GM12878 (cell line): ENCODE measurements at regions of chr10 and their contacts with region 1.

Region 1: GRCh38 chr10:102432162-102432950 is at the start of gene CUEDC2:
- DNase-seq: peak; percentile 88
- ATAC-seq: peak; percentile 95
- H3K4me3 ChIP-seq: peak within 1 kb of the TSS; percentile 93
- H3K27ac ChIP-seq: peak within 1 kb of the TSS; percentile 90
- H3K4me1 ChIP-seq: peaks cover 22% of the 10 kb centered on the region
- H3K27me3 ChIP-seq: no peaks in the 10 kb centered on the region
- CTCF ChIP-seq: no peak
- EP300 ChIP-seq: no peak; a peak in 1 of 4 replicates
- POLR2A ChIP-seq: peak; percentile 85
- RAD21 ChIP-seq: no peak
- polyA plus RNA-seq, gene CUEDC2: 20.4 to 45.2 TPM

Region 2: GRCh38 chr10:101782811-101783735 is 649.3 kb before region 1 on chr10 and contains the start of gene NPM3:
- CTCF ChIA-PET with region 1: no interaction called
- POLR2A ChIA-PET with region 1: no interaction called
- RAD21 ChIA-PET with region 1: no interaction called
- SMC1A ChIA-PET with region 1: no interaction called
- in situ Hi-C with region 1: no loop called
- intact Hi-C with region 1: no loop called
- DNase-seq: no peak
- ATAC-seq: peak; percentile 76
- H3K4me3 ChIP-seq: peak within 1 kb of the TSS; percentile 85
- H3K27ac ChIP-seq: peak within 1 kb of the TSS; percentile 71
- H3K4me1 ChIP-seq: peaks cover 41% of the 10 kb centered on the region
- H3K27me3 ChIP-seq: no peaks in the 10 kb centered on the region
- CTCF ChIP-seq: no peak
- EP300 ChIP-seq: no peak
- POLR2A ChIP-seq: peak; percentile 76
- RAD21 ChIP-seq: no peak
- polyA plus RNA-seq, gene NPM3: 19.7 to 49.6 TPM

Region 3: DNA sequence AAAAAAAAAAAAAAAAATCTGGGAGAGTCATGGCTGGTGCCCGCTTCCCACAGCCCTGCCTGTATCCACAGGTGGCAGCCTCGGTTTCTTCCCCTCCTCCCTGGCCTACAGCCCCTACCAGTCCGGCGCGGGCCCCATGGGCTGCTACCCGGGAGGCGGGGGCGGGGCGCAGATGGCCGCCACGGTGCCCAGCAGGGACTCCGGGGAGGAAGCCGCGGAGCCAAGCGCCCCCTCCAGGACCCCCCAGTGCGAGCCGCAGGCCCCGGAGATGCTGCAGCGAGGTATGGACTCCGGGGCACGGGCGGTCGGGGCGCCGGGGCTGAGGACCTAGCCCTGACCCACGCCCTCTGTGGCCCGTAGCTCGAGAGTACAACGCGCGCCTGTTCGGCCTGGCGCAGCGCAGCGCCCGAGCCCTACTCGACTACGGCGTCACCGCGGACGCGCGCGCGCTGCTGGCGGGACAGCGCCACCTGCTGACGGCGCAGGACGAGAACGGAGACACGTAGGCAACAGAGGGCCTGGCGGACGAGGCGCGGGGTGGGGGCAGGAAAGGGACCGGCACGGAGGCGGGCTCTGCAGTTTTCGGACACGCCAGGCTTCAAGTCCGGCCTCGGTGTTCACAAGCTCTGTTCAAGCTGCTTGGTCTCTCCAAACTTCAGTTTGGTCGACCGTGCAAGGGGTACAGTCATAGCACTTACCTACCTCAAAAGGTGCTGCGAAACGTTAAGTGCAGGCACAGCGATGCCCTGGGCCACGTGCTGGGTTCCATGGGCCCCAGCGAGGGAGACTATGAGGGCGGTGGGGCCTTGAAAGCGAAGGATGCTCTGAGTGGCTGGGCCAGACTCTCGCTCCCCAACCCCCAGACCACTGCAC is 32.9 kb before region 1 on chr10:
- CTCF ChIA-PET with region 1: interaction called, 15 read pairs
- POLR2A ChIA-PET with region 1: interaction called, 42 read pairs
- RAD21 ChIA-PET with region 1: interaction called, 4 read pairs
- SMC1A ChIA-PET with region 1: interaction called, 4 read pairs
- in situ Hi-C with region 1: no loop called
- intact Hi-C with region 1: no loop called
- DNase-seq: peak; percentile 56
- ATAC-seq: peak; percentile 66
- H3K4me3 ChIP-seq: peak overlapping the region; percentile 67
- H3K27ac ChIP-seq: peak overlapping the region; percentile 37
- H3K4me1 ChIP-seq: peaks cover 20% of the 10 kb centered on the region
- H3K27me3 ChIP-seq: no peaks in the 10 kb centered on the region
- CTCF ChIP-seq: peak; percentile 88 to 94 (median 88)
- EP300 ChIP-seq: no peak
- POLR2A ChIP-seq: peak; percentile 86
- RAD21 ChIP-seq: peak; percentile 61

Region 4: DNA sequence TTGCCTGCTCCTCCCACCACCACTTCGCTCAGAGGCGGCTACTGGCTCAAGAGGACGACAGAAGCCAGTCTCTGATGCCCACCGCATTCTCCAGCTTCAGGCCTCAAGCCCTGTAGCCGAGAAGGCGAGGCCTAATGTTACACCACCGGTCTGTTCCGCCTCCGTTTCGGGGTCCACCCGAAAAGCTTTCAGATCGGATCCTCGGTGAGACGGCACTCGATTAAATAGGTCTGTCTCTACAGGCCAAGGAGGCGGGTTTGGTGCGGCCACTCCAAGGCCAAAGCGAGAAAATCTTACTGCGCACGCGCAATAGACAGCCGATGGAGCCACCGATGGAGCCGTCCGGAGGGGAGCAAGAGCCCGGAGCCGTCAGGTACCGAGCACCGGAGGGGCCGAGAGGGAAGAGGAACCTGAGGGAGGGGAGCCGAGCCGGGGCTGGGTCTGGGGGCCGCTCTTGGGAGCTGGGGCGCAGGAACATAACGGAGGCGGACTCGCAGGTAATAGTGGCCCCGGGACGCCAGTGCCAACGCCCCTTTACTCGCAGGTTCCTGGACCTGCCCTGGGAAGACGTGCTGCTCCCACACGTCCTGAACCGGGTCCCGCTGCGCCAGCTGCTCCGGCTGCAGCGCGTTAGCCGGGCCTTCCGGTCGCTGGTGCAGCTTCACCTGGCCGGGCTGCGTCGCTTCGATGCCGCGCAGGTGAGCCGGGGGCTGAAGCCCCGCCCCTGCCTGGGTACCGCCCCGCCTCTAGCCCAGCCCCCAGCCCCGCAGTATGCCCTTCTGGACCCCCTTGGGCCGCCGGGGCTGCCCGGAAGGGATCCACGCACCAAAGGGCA is 11.3 kb before region 1 on chr10 and contains the start of gene FBXL15:
- CTCF ChIA-PET with region 1: interaction called, 11 read pairs
- POLR2A ChIA-PET with region 1: interaction called, 29 read pairs
- RAD21 ChIA-PET with region 1: interaction called, 24 read pairs
- SMC1A ChIA-PET with region 1: interaction called, 42 read pairs
- in situ Hi-C with region 1: no loop called
- intact Hi-C with region 1: loop called (anchors 1 kb)
- DNase-seq: peak; percentile 89
- ATAC-seq: peak; percentile 77
- H3K4me3 ChIP-seq: peak within 1 kb of the TSS; percentile 98
- H3K27ac ChIP-seq: peak within 1 kb of the TSS; percentile 85
- H3K4me1 ChIP-seq: peaks cover 18% of the 10 kb centered on the region
- H3K27me3 ChIP-seq: no peaks in the 10 kb centered on the region; a peak in 1 of 4 replicates
- CTCF ChIP-seq: no peak
- EP300 ChIP-seq: no peak
- POLR2A ChIP-seq: peak; percentile 79
- RAD21 ChIP-seq: no peak
- polyA plus RNA-seq, gene FBXL15: 0.13 to 0.66 TPM

Region 5: DNA sequence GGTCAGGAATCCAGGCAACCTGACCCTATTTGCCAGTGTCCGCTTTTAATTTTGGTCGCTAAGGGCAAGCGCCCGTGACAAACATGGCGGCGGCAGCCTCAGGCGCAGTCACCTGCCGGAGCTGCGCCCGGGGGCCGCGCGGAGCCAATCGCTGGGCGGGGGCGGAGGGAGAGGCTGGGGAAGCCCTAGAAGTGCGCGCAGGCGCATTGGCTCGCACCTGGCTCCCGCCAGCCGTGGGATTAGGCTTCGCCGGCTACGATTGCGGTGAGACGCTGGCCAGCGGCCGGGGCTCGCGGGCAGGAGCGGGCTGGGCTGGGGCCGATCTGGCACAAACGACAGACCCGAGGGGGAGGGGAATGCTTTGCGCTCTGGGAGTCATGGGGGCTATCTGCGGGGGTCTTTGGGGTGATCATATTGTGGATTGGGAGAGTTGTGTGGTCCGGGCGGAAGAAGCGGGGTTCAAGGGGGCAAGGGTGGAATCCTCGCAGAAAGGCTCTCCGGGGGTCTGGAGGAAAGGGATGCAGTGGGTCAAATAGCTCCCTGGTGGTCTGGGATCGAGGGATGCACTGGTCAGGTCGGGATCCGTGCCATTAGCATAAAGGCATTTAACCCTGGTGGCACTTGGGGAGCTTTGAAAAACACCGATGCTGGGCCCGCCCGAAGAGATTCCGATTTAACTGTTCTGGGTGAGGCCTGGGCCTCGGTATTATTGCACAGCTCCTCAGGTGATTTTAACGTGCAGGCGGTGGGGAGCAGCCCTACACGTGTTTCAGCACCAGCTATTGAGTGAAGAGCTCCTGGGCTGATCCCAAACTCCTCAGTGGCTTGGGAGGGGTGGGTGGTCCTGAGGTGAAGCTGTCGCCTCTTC is 29.1 kb after region 1 on chr10:
- CTCF ChIA-PET with region 1: interaction called, 8 read pairs
- POLR2A ChIA-PET with region 1: interaction called, 13 read pairs
- RAD21 ChIA-PET with region 1: interaction called, 5 read pairs
- SMC1A ChIA-PET with region 1: interaction called, 5 read pairs
- in situ Hi-C with region 1: no loop called
- intact Hi-C with region 1: loop called (anchors 1 kb)
- DNase-seq: peak; percentile 43
- ATAC-seq: peak; percentile 96
- H3K4me3 ChIP-seq: peak overlapping the region; percentile 73
- H3K27ac ChIP-seq: no peak overlapping the region
- H3K4me1 ChIP-seq: peaks cover 16% of the 10 kb centered on the region
- H3K27me3 ChIP-seq: no peaks in the 10 kb centered on the region
- CTCF ChIP-seq: no peak
- EP300 ChIP-seq: no peak
- POLR2A ChIP-seq: peak; percentile 53
- RAD21 ChIP-seq: no peak

Region 6: GRCh38 chr10:102691285-102692066 is 259.1 kb after region 1 on chr10:
- CTCF ChIA-PET with region 1: no interaction called
- POLR2A ChIA-PET with region 1: no interaction called
- RAD21 ChIA-PET with region 1: no interaction called
- SMC1A ChIA-PET with region 1: no interaction called
- in situ Hi-C with region 1: no loop called
- intact Hi-C with region 1: no loop called
- DNase-seq: no peak
- ATAC-seq: no peak
- H3K4me3 ChIP-seq: no peak overlapping the region
- H3K27ac ChIP-seq: no peak overlapping the region
- H3K4me1 ChIP-seq: no peaks in the 10 kb centered on the region
- H3K27me3 ChIP-seq: no peaks in the 10 kb centered on the region
- CTCF ChIP-seq: no peak
- EP300 ChIP-seq: no peak
- POLR2A ChIP-seq: no peak
- RAD21 ChIP-seq: no peak